Right ventricle myocardium inferior (tissue), 1 donor: ENCODE measurements at regions of chr12 and their contacts with region 1.

Region 1: DNA sequence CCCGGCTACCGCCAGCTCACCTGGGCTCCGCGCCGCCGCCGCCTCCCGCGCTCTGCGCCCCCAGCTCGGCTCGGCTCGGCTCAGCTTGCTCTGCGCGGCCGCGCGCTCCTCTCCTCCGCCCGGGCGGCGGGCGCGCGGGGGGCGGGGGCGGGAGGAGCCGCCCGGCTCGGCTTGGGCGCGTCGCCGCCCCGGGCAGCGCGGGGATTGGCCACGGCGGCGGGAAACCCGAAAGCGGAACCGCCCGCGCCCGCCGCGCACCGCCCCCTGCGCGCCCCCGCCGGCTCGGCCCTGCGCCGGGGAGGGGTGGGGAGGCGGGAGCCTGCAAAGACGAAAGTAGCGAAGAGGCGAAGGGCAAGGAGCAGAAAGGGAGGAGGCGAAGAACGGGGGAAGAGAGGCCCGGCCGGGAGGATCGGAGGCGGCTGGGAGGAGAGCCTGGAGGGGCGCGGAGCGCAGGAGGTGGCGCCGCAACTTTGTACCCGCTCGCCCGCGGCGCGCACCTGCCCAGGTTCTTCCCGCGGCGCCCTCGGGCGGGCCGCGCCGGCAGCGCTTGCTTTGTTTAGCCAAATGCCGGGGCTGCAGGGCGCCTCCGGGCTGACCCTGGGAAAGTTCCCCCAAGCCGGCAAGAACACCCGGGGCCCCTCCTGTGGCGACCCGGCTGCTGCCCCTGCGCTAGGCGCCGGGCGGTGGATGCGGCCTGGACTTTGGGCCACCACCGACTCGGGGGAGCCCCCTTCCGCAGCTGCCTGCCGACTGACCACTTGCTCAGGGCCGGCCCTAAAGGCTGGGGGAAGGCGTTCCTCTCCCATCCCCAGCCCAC is at the start of gene CAMKK2:
- DNase-seq: peak; percentile 92
- ATAC-seq: peak; percentile 95
- total RNA-seq, gene CAMKK2: 15.2 TPM

Region 2: GRCh38 chr12:121334513-121335343 is 37.9 kb after region 1 on chr12:
- intact Hi-C with region 1: no loop called
- DNase-seq: no peak
- ATAC-seq: peak; percentile 68

Region 3: GRCh38 chr12:121688966-121689365 is 392.1 kb after region 1 on chr12:
- intact Hi-C with region 1: loop called (anchors 10 kb)
- DNase-seq: no peak
- ATAC-seq: no peak